ENCODE measurements at regions of chr5 and their contacts with region 1.

Region 1: GRCh38 chr5:81105261-81105877 is 127.8 kb upstream of the CKMT2 start:
- DNase-seq: no peak
- ATAC-seq: peak; percentile 67
- H3K4me3 Mint-ChIP-seq: peak overlapping the region; percentile 32
- H3K27ac Mint-ChIP-seq: no peak overlapping the region
- H3K4me1 Mint-ChIP-seq: peaks cover 32% of the 10 kb centered on the region
- H3K27me3 Mint-ChIP-seq: no peaks in the 10 kb centered on the region

Region 2: GRCh38 chr5:80686757-80687156 is 418.6 kb before region 1 on chr5:
- CTCF ChIA-PET with region 1: interaction called, 44 read pairs
- POLR2A ChIA-PET with region 1: no interaction called
- DNase-seq: no peak
- ATAC-seq: no peak
- H3K4me3 Mint-ChIP-seq: no peak overlapping the region
- H3K27ac Mint-ChIP-seq: no peak overlapping the region
- H3K4me1 Mint-ChIP-seq: peaks cover 27% of the 10 kb centered on the region
- H3K27me3 Mint-ChIP-seq: no peaks in the 10 kb centered on the region

Region 3: DNA sequence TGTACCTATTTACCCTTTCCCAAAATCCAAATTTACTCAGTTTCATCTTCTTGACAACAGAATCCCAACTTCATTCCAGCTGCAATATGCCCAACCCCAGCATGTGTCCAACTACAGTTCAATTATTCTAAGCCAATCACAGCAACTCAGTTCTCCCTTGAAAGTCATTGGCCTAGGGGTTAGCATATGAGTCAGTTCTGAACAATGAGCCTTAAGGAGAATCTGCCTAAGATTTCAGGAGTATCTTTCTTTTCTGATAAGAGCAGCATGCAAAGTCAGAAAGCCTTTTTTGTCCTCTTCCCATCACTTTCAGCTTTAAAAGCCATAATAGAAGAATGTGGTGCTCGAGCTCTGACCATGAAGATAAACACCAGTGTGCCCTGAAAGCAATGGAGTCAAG is 189.7 kb before region 1 on chr5:
- CTCF ChIA-PET with region 1: interaction called, 10 read pairs
- POLR2A ChIA-PET with region 1: no interaction called
- DNase-seq: no peak
- ATAC-seq: no peak
- H3K4me3 Mint-ChIP-seq: no peak overlapping the region
- H3K27ac Mint-ChIP-seq: no peak overlapping the region
- H3K4me1 Mint-ChIP-seq: peaks cover 11% of the 10 kb centered on the region
- H3K27me3 Mint-ChIP-seq: no peaks in the 10 kb centered on the region

Region 4: DNA sequence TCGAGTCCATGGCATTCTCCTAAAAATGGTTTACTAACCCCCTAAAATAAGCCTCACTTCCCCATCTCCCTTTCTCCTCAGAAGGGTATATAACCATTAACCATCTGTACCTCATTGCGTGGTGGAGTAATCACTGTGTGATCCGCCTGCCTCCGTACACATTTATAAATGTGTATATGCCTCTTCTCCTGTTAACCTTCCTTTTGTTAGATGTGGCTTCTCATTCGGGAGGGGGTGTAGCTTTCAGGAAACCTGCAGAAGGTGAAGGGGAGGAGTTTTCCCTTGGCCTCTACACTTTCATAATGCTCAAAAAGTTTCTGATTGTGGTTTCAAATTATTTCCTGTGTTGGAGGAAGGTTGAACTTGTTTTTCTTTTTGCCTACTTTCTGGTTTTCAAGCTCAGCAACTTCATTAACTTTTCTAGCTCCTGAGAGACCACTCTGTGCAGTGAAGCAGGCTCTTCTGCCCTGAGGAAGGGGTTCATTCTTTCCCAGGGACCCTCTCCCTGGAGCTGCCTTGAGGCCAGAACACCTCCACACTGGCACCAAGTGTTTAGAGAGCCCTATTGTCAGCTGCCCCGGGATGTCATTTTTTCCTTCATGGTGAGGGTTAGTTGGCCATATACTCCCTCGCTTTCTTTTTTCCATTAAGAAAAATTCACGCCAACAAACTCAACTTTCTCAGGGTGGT is 98.3 kb before region 1 on chr5:
- CTCF ChIA-PET with region 1: interaction called, 13 read pairs
- POLR2A ChIA-PET with region 1: no interaction called
- DNase-seq: peak; percentile 71
- ATAC-seq: peak; percentile 86
- H3K4me3 Mint-ChIP-seq: peak overlapping the region; percentile 73
- H3K27ac Mint-ChIP-seq: peak overlapping the region; percentile 90
- H3K4me1 Mint-ChIP-seq: peaks cover 55% of the 10 kb centered on the region
- H3K27me3 Mint-ChIP-seq: no peaks in the 10 kb centered on the region

Region 5: GRCh38 chr5:81068063-81068462 is 37.3 kb before region 1 on chr5:
- CTCF ChIA-PET with region 1: no interaction called
- POLR2A ChIA-PET with region 1: no interaction called
- DNase-seq: no peak
- ATAC-seq: no peak
- H3K4me3 Mint-ChIP-seq: no peak overlapping the region
- H3K27ac Mint-ChIP-seq: no peak overlapping the region
- H3K4me1 Mint-ChIP-seq: no peaks in the 10 kb centered on the region
- H3K27me3 Mint-ChIP-seq: no peaks in the 10 kb centered on the region

Region 6: GRCh38 chr5:81194633-81195333 is 89.4 kb after region 1 on chr5:
- CTCF ChIA-PET with region 1: interaction called, 13 read pairs
- POLR2A ChIA-PET with region 1: no interaction called
- DNase-seq: peak; percentile 88
- ATAC-seq: peak; percentile 99
- H3K4me3 Mint-ChIP-seq: peak overlapping the region; percentile 36
- H3K27ac Mint-ChIP-seq: peak overlapping the region; percentile 58
- H3K4me1 Mint-ChIP-seq: peaks cover 9% of the 10 kb centered on the region
- H3K27me3 Mint-ChIP-seq: no peaks in the 10 kb centered on the region

Region 7: GRCh38 chr5:81310402-81311063 is 205.2 kb after region 1 on chr5:
- CTCF ChIA-PET with region 1: no interaction called
- POLR2A ChIA-PET with region 1: no interaction called
- DNase-seq: no peak
- ATAC-seq: no peak
- H3K4me3 Mint-ChIP-seq: no peak overlapping the region
- H3K27ac Mint-ChIP-seq: no peak overlapping the region
- H3K4me1 Mint-ChIP-seq: no peaks in the 10 kb centered on the region
- H3K27me3 Mint-ChIP-seq: no peaks in the 10 kb centered on the region

Measured in activated CD8-positive, alpha-beta T cell treated with anti-CD3 and anti-CD28 coated beads, Interleukin-2, amount 10 ng/mL, durations not matched to agents 7 days and 5 days (primary cell).